ENCODE measurements at regions of chr1 and their contacts with region 1.

Region 1: GRCh38 chr1:213015099-213016050 is at the start of gene ANGEL2:
- DNase-seq: peak; percentile 98
- ATAC-seq: peak; percentile 99
- total RNA-seq, gene ANGEL2: 14.3 TPM

Region 2: GRCh38 chr1:212608209-212608955 is 407.0 kb before region 1 on chr1 and contains the start of gene ATF3:
- intact Hi-C with region 1: no loop called
- DNase-seq: peak; percentile 99
- ATAC-seq: peak; percentile 97
- total RNA-seq, gene ATF3: 13.7 TPM

Region 3: GRCh38 chr1:213051127-213051880 is 35.9 kb after region 1 on chr1 and contains the start of gene RPS6KC1:
- intact Hi-C with region 1: loop called (anchors 5 kb)
- DNase-seq: peak; percentile 94
- ATAC-seq: peak; percentile 99
- total RNA-seq, gene RPS6KC1: 10.8 TPM

Measured in Right ventricle myocardium inferior (tissue), 1 donor.